Heart left ventricle (tissue), 16 donors: ENCODE measurements at regions of chr16 and their contacts with region 1.

Region 1: GRCh38 chr16:2905431-2906387 is 6.0 kb upstream of the FLYWCH1 start:
- DNase-seq: peak; percentile 99 to 100 (median 99)
- ATAC-seq: peak; percentile 88 to 93 (median 91)
- H3K4me3 ChIP-seq: peak overlapping the region; percentile 64 to 96 (median 81)
- H3K27ac ChIP-seq: peak overlapping the region in 10 of 12 donors; percentile 91 to 100 (median 98)
- H3K4me1 ChIP-seq: peaks cover 0 to 23% (median 12%) of the 10 kb centered on the region in 12 donors
- H3K27me3 ChIP-seq: no peaks in the 10 kb centered on the region
- CTCF ChIP-seq: no peak
- POLR2A ChIP-seq: no peak

Region 2: DNA sequence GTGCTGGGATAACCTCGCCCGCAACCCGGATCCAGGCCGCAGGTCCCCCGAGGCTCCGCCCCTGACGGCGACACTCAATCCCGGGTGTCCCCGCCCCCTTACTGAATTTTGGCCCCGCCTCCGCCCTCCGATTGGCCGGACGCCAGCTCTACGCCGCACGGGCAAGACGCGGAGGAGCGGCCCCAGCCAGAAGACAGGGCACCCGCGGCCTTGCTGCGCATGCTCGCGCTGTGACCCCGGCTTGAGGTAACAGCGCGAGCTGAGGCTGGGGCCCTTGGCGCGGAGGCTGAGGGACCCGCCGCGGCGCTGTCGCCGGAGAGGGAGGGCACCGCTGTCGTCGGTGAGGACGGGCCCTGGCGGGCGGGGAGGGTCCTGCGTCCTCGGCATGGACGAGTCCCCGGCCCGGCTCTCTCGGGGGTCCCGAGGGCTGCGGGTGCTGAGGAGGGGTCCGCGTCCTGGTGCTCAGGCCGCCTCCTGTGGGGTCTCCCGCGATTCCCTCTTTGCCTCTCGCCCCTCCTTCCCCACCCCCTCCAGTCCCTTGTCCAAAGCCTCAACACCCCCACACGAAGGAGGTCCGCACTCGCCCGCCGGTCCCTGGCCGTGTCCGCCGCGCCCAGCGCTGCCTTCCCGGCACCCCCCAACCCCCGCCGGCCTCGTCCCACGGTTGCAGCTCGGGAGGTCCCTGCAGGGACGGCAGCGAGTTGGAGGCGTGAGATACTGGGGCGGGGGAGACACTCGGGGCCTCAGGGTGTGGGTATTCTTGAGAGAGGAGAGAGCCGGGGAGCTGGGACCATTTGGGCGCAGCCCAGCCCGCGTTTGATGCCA is 22.5 kb before region 1 on chr16 and contains the start of gene FLYWCH2:
- intact Hi-C with region 1: loop called in 9 of 10 experiments (anchors 2 kb)
- DNase-seq: peak; percentile 97 to 100 (median 98)
- ATAC-seq: peak; percentile 87 to 95 (median 90)
- H3K4me3 ChIP-seq: peak within 1 kb of the TSS; percentile 64 to 99 (median 88)
- H3K27ac ChIP-seq: peak within 1 kb of the TSS; percentile 70 to 99 (median 96)
- H3K4me1 ChIP-seq: peaks cover 0 to 16% (median 8%) of the 10 kb centered on the region in 12 donors
- H3K27me3 ChIP-seq: no peaks in the 10 kb centered on the region
- CTCF ChIP-seq: peak in 3 of 12 donors; percentile 13 to 18 (median 13)
- POLR2A ChIP-seq: peak in 1 of 2 donors; percentile 73
- total RNA-seq, gene FLYWCH2: 20.1 to 64.1 (median 22.6) TPM